Right lobe of liver (tissue), 6 donors: ENCODE measurements at regions of chr6 and their contacts with region 1.

Region 1: GRCh38 chr6:137697267-137697938 is 169.7 kb upstream of the TNFAIP3 start:
- DNase-seq: no peak
- ATAC-seq: peak; percentile 56 to 74 (median 72)
- H3K4me3 ChIP-seq: no peak overlapping the region
- H3K27ac ChIP-seq: no peak overlapping the region
- H3K4me1 ChIP-seq: no peaks in the 10 kb centered on the region
- H3K27me3 ChIP-seq: no peaks in the 10 kb centered on the region
- CTCF ChIP-seq: no peak
- POLR2A ChIP-seq: no peak

Region 2: GRCh38 chr6:137853569-137854213 is 156.3 kb after region 1 on chr6:
- intact Hi-C with region 1: loop called in 1 of 2 experiments (anchors 10 kb)
- DNase-seq: no peak
- ATAC-seq: no peak
- H3K4me3 ChIP-seq: no peak overlapping the region
- H3K27ac ChIP-seq: no peak overlapping the region
- H3K4me1 ChIP-seq: no peaks in the 10 kb centered on the region
- H3K27me3 ChIP-seq: no peaks in the 10 kb centered on the region
- CTCF ChIP-seq: no peak
- POLR2A ChIP-seq: no peak